Endothelial cell of umbilical vein (primary cell): ENCODE measurements at regions of chr6 and their contacts with region 1.

Region 1: DNA sequence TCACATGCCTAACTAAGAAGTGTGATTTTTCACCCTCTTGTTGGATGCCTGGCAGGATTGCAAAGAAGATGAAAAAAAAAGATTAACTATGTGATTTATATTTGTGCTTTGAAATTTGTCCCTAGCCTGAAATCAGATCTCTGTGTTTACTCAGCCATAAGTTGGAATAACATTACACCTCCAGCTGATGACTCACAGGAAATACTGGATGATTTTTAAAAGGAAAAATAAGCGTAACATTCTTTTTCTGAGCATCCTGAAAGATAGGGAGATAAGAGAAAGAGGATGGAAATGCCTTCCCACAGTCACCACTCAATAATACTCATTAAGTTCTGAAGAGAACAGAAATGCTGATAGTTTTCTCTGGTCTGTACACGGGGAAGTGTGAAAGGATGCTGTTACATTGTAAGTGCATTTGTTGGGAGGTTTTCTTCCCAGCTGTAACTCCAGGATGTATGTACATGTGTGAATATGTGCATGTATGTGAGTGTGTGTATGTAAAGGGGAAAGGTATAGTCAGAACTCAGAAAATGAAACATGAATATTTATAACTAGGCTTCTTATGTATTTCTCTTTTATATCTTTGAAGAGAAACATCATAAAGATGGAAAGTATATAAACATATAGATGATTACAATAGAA is 37.4 kb upstream of the RIPPLY2 start:
- DNase-seq: peak; percentile 97
- H3K4me3 ChIP-seq: no peak overlapping the region
- H3K27ac ChIP-seq: peak overlapping the region; percentile 57
- H3K4me1 ChIP-seq: peaks cover 28% of the 10 kb centered on the region
- H3K27me3 ChIP-seq: no peaks in the 10 kb centered on the region
- CTCF ChIP-seq: no peak
- POLR2A ChIP-seq: peak; percentile 78

Region 2: GRCh38 chr6:83708970-83709747 is 106.6 kb before region 1 on chr6 and contains the start of gene SNAP91:
- CTCF ChIA-PET with region 1: no interaction called
- POLR2A ChIA-PET with region 1: no interaction called
- dilution Hi-C with region 1: no loop called
- intact Hi-C with region 1: loop called (anchors 5 kb)
- DNase-seq: peak; percentile 51
- H3K4me3 ChIP-seq: peak within 1 kb of the TSS; percentile 48 to 68 (median 54)
- H3K27ac ChIP-seq: no peak within 1 kb of the TSS
- H3K4me1 ChIP-seq: peaks cover 14% of the 10 kb centered on the region
- H3K27me3 ChIP-seq: peaks cover 9 to 34% of the 10 kb centered on the region in 2 experiments
- CTCF ChIP-seq: no peak
- POLR2A ChIP-seq: no peak
- total RNA-seq, gene SNAP91: 0.72 and 1.5 TPM in 2 replicates

Region 3: DNA sequence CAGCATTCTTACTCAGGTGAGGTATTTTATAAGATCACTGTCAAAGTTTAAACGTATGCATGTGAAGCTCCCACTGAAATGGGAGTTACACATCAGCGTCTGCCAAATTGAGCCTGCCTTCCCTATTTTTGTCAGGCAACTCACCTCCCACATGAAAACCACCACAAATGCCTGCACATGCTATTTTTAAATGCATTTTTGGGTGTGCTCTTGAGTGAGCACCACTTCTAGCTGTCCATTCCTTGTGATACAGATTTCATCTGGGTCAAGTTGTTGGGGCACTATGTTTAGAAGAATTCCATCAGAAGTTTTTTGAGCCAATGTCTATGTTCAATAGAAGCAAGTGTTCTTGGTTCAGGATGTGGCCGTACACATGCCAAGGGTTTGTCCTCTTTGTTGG is 34.2 kb before region 1 on chr6:
- CTCF ChIA-PET with region 1: no interaction called
- POLR2A ChIA-PET with region 1: no interaction called
- dilution Hi-C with region 1: no loop called
- intact Hi-C with region 1: no loop called
- DNase-seq: no peak
- H3K4me3 ChIP-seq: no peak overlapping the region
- H3K27ac ChIP-seq: no peak overlapping the region
- H3K4me1 ChIP-seq: no peaks in the 10 kb centered on the region
- H3K27me3 ChIP-seq: no peaks in the 10 kb centered on the region
- CTCF ChIP-seq: no peak
- POLR2A ChIP-seq: no peak

Region 4: GRCh38 chr6:83859410-83860358 is 43.9 kb after region 1 on chr6 and contains the start of gene CYB5R4:
- CTCF ChIA-PET with region 1: interaction called, 4 read pairs
- POLR2A ChIA-PET with region 1: no interaction called
- dilution Hi-C with region 1: no loop called
- intact Hi-C with region 1: loop called (anchors 1 kb)
- DNase-seq: peak; percentile 94
- H3K4me3 ChIP-seq: peak within 1 kb of the TSS; percentile 29 to 85 (median 79)
- H3K27ac ChIP-seq: peak within 1 kb of the TSS; percentile 36
- H3K4me1 ChIP-seq: peaks cover 8% of the 10 kb centered on the region
- H3K27me3 ChIP-seq: peaks cover 3 to 13% of the 10 kb centered on the region in 2 experiments
- CTCF ChIP-seq: peak; percentile 46 to 76
- POLR2A ChIP-seq: peak; percentile 75
- total RNA-seq, gene CYB5R4: 13.4 TPM in 2 replicates

Region 5: DNA sequence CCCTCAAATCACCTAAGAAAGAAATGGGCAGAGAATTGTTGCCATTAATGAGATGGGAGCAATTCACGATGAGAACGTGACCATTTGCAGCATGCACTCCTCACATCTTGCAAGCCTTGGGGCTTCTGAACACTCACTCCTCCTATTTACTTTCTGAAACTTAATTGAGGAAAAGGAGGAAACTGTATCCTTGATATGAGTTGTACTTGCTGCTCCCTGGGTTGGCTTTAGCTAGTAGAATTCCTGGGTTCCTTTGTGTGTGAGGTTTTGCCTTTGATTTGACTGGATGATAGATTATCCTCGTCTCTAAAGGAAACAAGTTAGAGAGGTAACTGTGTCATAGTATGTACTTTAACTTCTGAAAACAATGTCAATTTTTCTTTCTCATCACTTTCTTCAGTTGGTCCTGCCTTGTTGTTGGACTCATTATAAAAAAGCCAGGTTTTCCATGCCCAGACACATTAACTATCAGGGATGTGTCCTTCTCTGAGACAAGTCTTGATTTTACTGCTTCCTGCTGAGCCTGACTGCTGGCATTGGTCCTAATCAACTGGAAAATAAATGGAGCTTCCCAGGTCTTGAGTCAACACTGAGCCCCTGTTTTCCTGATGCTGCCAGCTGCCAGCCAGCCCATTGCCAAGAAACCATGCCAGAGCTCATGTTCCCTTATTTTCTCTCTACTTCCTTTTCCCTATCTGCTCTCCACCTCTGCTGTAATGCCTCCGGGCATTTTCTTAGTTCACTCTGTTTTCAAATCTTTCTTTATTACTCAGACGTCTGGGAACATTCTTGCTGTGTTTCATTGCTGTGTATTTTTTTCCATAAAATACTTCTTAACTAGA is 211.8 kb after region 1 on chr6:
- CTCF ChIA-PET with region 1: no interaction called
- POLR2A ChIA-PET with region 1: no interaction called
- dilution Hi-C with region 1: no loop called
- intact Hi-C with region 1: loop called (anchors 1 kb)
- DNase-seq: peak; percentile 98
- H3K4me3 ChIP-seq: no peak overlapping the region
- H3K27ac ChIP-seq: peak overlapping the region; percentile 26
- H3K4me1 ChIP-seq: peaks cover 24% of the 10 kb centered on the region
- H3K27me3 ChIP-seq: no peaks in the 10 kb centered on the region
- CTCF ChIP-seq: no peak
- POLR2A ChIP-seq: no peak

Region 6: GRCh38 chr6:84193114-84193708 is 377.5 kb after region 1 on chr6:
- CTCF ChIA-PET with region 1: no interaction called
- POLR2A ChIA-PET with region 1: no interaction called
- dilution Hi-C with region 1: no loop called
- intact Hi-C with region 1: loop called (anchors 1 kb)
- DNase-seq: peak; percentile 90
- H3K4me3 ChIP-seq: no peak overlapping the region
- H3K27ac ChIP-seq: peak overlapping the region; percentile 39
- H3K4me1 ChIP-seq: peaks cover 17% of the 10 kb centered on the region
- H3K27me3 ChIP-seq: no peaks in the 10 kb centered on the region
- CTCF ChIP-seq: no peak
- POLR2A ChIP-seq: no peak

Region 7: GRCh38 chr6:84227434-84228197 is 411.9 kb after region 1 on chr6 and contains the start of gene CEP162:
- CTCF ChIA-PET with region 1: interaction called, 3 read pairs
- POLR2A ChIA-PET with region 1: no interaction called
- dilution Hi-C with region 1: no loop called
- intact Hi-C with region 1: loop called (anchors 1 kb)
- DNase-seq: peak; percentile 95
- H3K4me3 ChIP-seq: peak within 1 kb of the TSS; percentile 57 to 74 (median 67)
- H3K27ac ChIP-seq: peak within 1 kb of the TSS; percentile 14
- H3K4me1 ChIP-seq: peaks cover 7% of the 10 kb centered on the region
- H3K27me3 ChIP-seq: peaks cover 11 to 24% of the 10 kb centered on the region in 2 experiments
- CTCF ChIP-seq: peak; percentile 55 to 62
- POLR2A ChIP-seq: peak; percentile 20
- total RNA-seq, gene CEP162: 8.8 and 10.8 TPM in 2 replicates